BJ (cell line): ENCODE measurements at regions of chr20 and their contacts with region 1.

Region 1: GRCh38 chr20:46132705-46133120 is 14.6 kb downstream of the CD40 start:
- DNase-seq: no peak
- H3K4me3 ChIP-seq: no peak overlapping the region
- H3K27me3 ChIP-seq: 0 out of 2 replicates have a peak, but pooled peaks cover 2% of the 10 kb centered on the region
- CTCF ChIP-seq: peak; percentile 86

Region 2: DNA sequence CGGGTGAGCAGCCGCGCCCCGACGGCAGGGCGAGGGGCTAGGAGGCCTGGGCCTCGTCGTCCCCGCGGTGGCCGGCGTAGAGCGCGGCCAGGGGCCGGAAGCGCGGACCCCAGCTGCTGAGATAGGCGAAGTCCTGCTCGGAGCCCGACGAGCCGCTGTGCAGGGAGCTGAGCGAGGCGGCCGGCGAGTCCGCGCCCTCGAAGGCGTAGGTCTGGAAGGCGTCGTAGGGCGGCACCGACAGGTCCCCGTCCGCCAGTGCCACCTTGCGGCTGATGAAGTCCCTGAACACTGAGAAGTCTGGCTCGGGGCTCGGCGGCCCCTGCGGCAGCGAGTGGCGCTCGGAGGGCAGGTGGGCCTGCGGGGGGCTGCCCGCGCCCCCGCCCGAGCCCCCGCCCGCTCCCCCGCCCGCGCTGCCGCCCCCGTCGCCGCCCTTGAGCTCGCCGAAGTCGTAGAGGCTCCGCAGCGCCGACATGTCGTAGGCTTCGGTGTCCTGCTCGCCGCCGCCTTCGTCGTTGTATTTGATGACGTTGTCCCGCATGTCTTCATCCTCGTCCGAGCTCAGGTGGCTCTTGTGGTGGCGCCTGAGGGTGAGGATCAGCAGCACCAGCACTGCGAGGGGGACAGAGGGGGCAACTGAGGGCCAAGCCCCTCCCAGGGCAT is 41.9 kb after region 1 on chr20:
- CTCF ChIA-PET with region 1: interaction called, 16 read pairs
- POLR2A ChIA-PET with region 1: no interaction called
- DNase-seq: no peak
- H3K4me3 ChIP-seq: no peak overlapping the region
- H3K27me3 ChIP-seq: peaks cover 18% of the 10 kb centered on the region
- CTCF ChIP-seq: peak; percentile 65

Region 3: GRCh38 chr20:46359233-46359751 is 226.6 kb after region 1 on chr20:
- CTCF ChIA-PET with region 1: no interaction called
- POLR2A ChIA-PET with region 1: no interaction called
- DNase-seq: no peak
- H3K4me3 ChIP-seq: no peak overlapping the region
- H3K27me3 ChIP-seq: no peaks in the 10 kb centered on the region
- CTCF ChIP-seq: no peak

Region 4: GRCh38 chr20:46438156-46438750 is 305.5 kb after region 1 on chr20:
- CTCF ChIA-PET with region 1: interaction called, 13 read pairs
- POLR2A ChIA-PET with region 1: no interaction called
- DNase-seq: no peak
- H3K4me3 ChIP-seq: no peak overlapping the region
- H3K27me3 ChIP-seq: no peaks in the 10 kb centered on the region; the same call in 1 of the 2 replicates
- CTCF ChIP-seq: peak; percentile 45